Ovary (tissue), 10 donors: ENCODE measurements at regions of chr15 and their contacts with region 1.

Region 1: GRCh38 chr15:58549785-58550074 is 117.9 kb downstream of the LIPC start:
- DNase-seq: no peak
- H3K4me3 ChIP-seq: no peak overlapping the region
- H3K27ac ChIP-seq: no peak overlapping the region
- H3K4me1 ChIP-seq: peaks cover 10% of the 10 kb centered on the region
- H3K27me3 ChIP-seq: no peaks in the 10 kb centered on the region
- CTCF ChIP-seq: no peak
- EP300 ChIP-seq: no peak
- POLR2A ChIP-seq: no peak

Region 2: GRCh38 chr15:58574631-58575030 is 24.9 kb after region 1 on chr15:
- intact Hi-C with region 1: loop called in 1 of 4 experiments (anchors 1 kb)
- DNase-seq: no peak
- H3K4me3 ChIP-seq: no peak overlapping the region
- H3K27ac ChIP-seq: no peak overlapping the region
- H3K4me1 ChIP-seq: no peaks in the 10 kb centered on the region
- H3K27me3 ChIP-seq: no peaks in the 10 kb centered on the region
- CTCF ChIP-seq: no peak
- EP300 ChIP-seq: no peak
- POLR2A ChIP-seq: no peak